Calu3 (cell line): ENCODE measurements at regions of chr20 and their contacts with region 1.

Region 1: DNA sequence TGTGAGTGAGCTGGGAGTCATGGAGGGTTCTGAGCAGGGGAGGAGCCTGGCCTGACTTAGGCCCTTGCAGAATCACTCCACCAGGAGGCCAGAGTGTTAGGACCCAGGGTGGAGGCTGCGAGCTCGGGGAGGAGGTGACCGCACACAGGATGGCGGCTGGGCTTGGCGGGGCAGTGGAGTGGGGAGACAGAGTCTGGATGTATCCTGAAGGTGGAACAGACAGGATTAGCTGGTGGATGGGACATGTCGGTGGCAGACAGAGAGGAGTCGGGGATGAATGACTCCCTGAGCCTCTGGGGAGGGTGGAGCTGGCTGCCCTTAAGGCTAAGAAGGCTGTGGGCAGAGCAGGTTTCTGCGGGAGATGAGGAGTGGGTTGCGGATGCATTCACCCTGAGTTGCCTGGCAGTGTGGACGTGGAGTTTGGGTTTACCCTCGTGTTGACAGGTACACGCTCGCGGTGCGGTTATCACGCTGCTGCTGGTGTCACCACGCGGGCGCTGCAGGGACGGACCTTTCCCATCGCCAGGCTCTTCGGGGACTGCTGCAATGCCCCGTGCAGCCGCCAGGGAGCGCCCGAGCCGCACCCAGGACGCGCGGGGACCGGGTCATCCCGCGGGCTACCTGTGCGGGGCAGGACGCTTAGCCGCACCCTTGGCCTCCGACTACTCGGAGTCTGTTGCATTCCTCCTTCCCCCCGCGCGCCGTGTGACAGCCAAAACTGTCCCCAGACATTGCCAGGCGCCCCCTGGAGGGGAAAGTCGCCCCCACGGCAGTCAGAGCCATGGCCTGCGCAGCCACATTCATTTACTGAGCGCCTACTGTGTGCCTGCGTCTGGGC is 43.0 kb upstream of the PTGIS start:
- DNase-seq: peak; percentile 98
- H3K4me3 Mint-ChIP-seq: peak overlapping the region; percentile 67
- H3K27ac Mint-ChIP-seq: peak overlapping the region; percentile 67
- H3K4me1 Mint-ChIP-seq: peaks cover 58% of the 10 kb centered on the region
- H3K27me3 Mint-ChIP-seq: peaks cover 11% of the 10 kb centered on the region
- CTCF ChIP-seq: peak; percentile 100

Region 2: GRCh38 chr20:49330544-49331239 is 280.2 kb before region 1 on chr20:
- CTCF ChIA-PET with region 1: interaction called, 3 read pairs
- intact Hi-C with region 1: loop called (anchors 2 kb)
- DNase-seq: no peak
- H3K4me3 Mint-ChIP-seq: no peak overlapping the region
- H3K27ac Mint-ChIP-seq: no peak overlapping the region
- H3K4me1 Mint-ChIP-seq: no peaks in the 10 kb centered on the region
- H3K27me3 Mint-ChIP-seq: peaks cover 86% of the 10 kb centered on the region
- CTCF ChIP-seq: no peak

Region 3: GRCh38 chr20:49631061-49631788 is 20.3 kb after region 1 on chr20:
- CTCF ChIA-PET with region 1: no interaction called
- intact Hi-C with region 1: no loop called
- DNase-seq: no peak
- H3K4me3 Mint-ChIP-seq: no peak overlapping the region
- H3K27ac Mint-ChIP-seq: peak overlapping the region; percentile 32
- H3K4me1 Mint-ChIP-seq: peaks cover 20% of the 10 kb centered on the region
- H3K27me3 Mint-ChIP-seq: no peaks in the 10 kb centered on the region
- CTCF ChIP-seq: no peak

Region 4: GRCh38 chr20:49641683-49642656 is 31.1 kb after region 1 on chr20:
- CTCF ChIA-PET with region 1: interaction called, 3 read pairs
- intact Hi-C with region 1: loop called (anchors 1 kb)
- DNase-seq: peak; percentile 56
- H3K4me3 Mint-ChIP-seq: no peak overlapping the region
- H3K27ac Mint-ChIP-seq: peak overlapping the region; percentile 37
- H3K4me1 Mint-ChIP-seq: peaks cover 19% of the 10 kb centered on the region
- H3K27me3 Mint-ChIP-seq: no peaks in the 10 kb centered on the region
- CTCF ChIP-seq: no peak

Region 5: DNA sequence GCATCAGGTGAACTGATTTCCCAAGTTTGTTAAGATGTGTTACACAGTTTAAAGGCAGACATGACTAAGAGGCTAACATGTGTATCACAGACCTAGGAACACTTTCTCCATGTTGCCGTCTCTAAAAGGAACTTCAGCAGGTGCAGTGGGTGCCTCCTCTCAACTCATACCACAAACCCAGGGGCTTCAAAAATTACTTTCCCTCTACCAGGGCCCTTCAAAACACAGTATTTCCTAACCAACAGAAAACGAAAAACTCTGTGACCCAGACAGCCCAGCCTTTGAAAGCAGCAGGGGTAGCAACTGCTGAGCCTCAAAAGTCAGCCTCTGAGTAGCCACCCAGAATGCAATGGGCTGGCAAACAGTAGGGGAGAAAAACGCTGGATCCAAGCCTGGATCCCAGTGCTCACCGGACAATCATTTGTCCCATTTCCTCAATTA is 74.3 kb after region 1 on chr20:
- CTCF ChIA-PET with region 1: no interaction called
- intact Hi-C with region 1: no loop called
- DNase-seq: no peak
- H3K4me3 Mint-ChIP-seq: no peak overlapping the region
- H3K27ac Mint-ChIP-seq: no peak overlapping the region
- H3K4me1 Mint-ChIP-seq: peaks cover 80% of the 10 kb centered on the region
- H3K27me3 Mint-ChIP-seq: no peaks in the 10 kb centered on the region
- CTCF ChIP-seq: no peak

Region 6: GRCh38 chr20:49699200-49699992 is 88.5 kb after region 1 on chr20:
- CTCF ChIA-PET with region 1: interaction called, 3 read pairs
- intact Hi-C with region 1: loop called (anchors 5 kb)
- DNase-seq: no peak
- H3K4me3 Mint-ChIP-seq: peak overlapping the region; percentile 6
- H3K27ac Mint-ChIP-seq: peak overlapping the region; percentile 63
- H3K4me1 Mint-ChIP-seq: peaks cover 70% of the 10 kb centered on the region
- H3K27me3 Mint-ChIP-seq: no peaks in the 10 kb centered on the region
- CTCF ChIP-seq: no peak

Region 7: GRCh38 chr20:49737260-49737659 is 126.3 kb after region 1 on chr20:
- CTCF ChIA-PET with region 1: no interaction called
- intact Hi-C with region 1: no loop called
- DNase-seq: no peak
- H3K4me3 Mint-ChIP-seq: no peak overlapping the region
- H3K27ac Mint-ChIP-seq: no peak overlapping the region
- H3K4me1 Mint-ChIP-seq: no peaks in the 10 kb centered on the region
- H3K27me3 Mint-ChIP-seq: no peaks in the 10 kb centered on the region
- CTCF ChIP-seq: no peak

Region 8: DNA sequence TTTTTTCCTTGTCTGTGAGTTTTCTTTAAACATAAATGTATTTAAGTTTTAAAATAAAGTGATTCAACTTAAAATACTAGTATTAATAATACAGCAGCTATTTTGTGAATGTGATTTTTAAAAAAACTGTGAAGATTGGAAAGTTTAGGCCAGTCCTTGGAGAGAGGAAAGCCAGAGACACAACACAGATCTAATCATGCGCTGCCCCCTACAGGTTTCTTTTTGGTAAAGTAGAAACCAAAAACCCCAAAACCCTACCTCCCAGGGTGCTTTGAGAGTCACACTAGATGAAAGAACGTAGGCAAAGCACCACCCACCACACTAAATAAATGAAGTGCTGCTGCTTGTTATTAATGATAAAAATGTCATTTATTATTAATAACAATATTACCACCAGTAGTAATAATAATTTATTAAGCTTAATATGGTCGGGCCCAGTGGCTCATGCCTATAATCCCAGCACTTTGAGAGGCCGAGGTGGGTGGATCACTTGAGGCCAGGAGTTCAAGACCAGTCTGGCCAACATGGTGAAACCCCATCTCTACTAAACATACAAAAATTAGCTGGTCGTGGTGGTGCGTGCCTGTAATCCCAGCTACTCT is 235.4 kb after region 1 on chr20:
- CTCF ChIA-PET with region 1: interaction called, 25 read pairs
- intact Hi-C with region 1: loop called (anchors 1 kb)
- DNase-seq: peak; percentile 82
- H3K4me3 Mint-ChIP-seq: no peak overlapping the region
- H3K27ac Mint-ChIP-seq: no peak overlapping the region
- H3K4me1 Mint-ChIP-seq: no peaks in the 10 kb centered on the region
- H3K27me3 Mint-ChIP-seq: no peaks in the 10 kb centered on the region
- CTCF ChIP-seq: peak; percentile 79

Region 9: DNA sequence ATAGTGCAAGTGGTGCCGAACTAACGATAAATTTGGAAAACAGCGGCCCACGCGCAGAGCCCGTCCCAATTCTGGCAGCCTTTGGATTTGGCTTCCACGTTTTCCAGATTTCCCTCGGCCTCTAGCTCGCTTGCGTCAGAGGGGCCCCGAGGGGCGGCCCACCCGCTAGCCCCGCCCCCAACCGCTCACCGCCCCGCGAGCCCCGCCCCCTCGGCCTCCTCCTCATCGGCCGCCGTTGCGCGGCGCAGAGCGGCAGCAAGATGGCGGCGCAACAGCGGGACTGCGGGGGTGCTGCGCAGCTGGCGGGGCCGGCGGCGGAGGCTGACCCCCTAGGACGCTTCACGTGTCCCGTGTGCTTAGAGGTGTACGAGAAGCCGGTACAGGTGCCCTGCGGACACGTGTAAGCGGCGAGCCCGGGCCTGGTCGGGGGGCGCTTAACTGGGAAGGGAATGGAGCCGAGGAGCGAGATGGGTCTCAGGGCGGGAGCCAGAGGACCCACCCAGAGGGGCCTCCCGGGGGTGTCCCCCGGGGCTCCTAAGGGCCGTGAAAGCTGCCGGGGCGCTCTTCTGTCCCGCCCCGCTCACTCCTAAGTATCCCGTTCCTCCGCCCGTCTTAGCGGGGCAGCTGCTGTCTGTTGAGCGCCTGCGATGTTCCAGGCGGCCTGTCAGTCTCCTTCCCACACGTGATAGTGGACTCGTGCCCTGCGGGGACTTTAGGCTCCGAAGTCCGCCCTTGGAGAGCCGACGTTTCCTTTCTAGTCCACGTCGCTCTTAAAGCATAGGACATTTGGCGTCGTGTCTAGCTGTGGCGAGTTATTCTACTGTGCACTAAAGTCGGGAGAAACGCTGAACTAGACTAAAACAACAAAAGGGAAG is 325.5 kb after region 1 on chr20 and contains the start of gene RNF114:
- CTCF ChIA-PET with region 1: interaction called, 14 read pairs
- intact Hi-C with region 1: no loop called
- DNase-seq: peak; percentile 96
- H3K4me3 Mint-ChIP-seq: peak within 1 kb of the TSS; percentile 96
- H3K27ac Mint-ChIP-seq: peak within 1 kb of the TSS; percentile 65
- H3K4me1 Mint-ChIP-seq: peaks cover 31% of the 10 kb centered on the region
- H3K27me3 Mint-ChIP-seq: no peaks in the 10 kb centered on the region
- CTCF ChIP-seq: no peak
- total RNA-seq, gene RNF114: 72.3 and 93.9 TPM in 2 replicates